ENCODE measurements at regions of chr9 and their contacts with region 1.

Region 1: DNA sequence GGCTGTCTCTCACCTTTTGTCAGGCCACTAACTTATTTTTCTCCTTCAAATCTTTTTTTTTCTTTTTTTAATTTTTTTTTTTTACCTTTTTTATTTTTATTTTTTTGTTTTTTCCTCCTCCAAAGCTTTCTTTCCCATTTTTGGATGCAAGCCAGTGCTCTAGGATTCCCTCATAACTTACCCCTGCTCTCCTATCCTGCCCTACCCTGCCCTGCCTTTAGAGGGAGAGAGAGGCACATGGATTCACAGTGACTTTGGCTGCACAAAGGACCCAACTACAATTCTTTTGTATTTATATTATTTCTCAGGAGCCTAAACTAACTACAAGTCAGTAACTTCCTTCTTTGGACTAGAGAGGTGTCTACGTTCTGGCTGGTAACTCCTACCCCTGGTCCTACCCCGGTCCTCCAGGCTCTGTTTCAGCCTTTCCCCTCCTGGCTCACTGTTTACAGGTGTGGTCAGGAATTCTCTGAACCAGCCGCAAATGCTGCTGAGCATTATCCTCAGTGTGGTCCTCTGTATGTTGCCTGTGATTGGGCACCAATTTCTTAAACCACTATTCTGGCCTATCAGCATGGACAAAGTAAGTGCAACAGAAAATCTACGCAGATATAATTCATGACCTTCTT is 8.4 kb upstream of the RUSC2 start:
- DNase-seq: peak in 1 of 2 donors; percentile 38
- H3K4me3 ChIP-seq: no peak overlapping the region
- CTCF ChIP-seq: no peak
- POLR2A ChIP-seq: no peak

Region 2: GRCh38 chr9:35116898-35117551 is 364.4 kb before region 1 on chr9:
- intact Hi-C with region 1: loop called (anchors 5 kb)
- DNase-seq: peak; percentile 92 to 97
- H3K4me3 ChIP-seq: no peak overlapping the region
- CTCF ChIP-seq: peak in 1 of 3 donors; percentile 87
- POLR2A ChIP-seq: no peak

Region 3: GRCh38 chr9:35553670-35554543 is 72.4 kb after region 1 on chr9:
- intact Hi-C with region 1: loop called (anchors 5 kb)
- DNase-seq: peak; percentile 61 to 92
- H3K4me3 ChIP-seq: no peak overlapping the region
- CTCF ChIP-seq: peak in 1 of 3 donors; percentile 39
- POLR2A ChIP-seq: no peak

Region 4: DNA sequence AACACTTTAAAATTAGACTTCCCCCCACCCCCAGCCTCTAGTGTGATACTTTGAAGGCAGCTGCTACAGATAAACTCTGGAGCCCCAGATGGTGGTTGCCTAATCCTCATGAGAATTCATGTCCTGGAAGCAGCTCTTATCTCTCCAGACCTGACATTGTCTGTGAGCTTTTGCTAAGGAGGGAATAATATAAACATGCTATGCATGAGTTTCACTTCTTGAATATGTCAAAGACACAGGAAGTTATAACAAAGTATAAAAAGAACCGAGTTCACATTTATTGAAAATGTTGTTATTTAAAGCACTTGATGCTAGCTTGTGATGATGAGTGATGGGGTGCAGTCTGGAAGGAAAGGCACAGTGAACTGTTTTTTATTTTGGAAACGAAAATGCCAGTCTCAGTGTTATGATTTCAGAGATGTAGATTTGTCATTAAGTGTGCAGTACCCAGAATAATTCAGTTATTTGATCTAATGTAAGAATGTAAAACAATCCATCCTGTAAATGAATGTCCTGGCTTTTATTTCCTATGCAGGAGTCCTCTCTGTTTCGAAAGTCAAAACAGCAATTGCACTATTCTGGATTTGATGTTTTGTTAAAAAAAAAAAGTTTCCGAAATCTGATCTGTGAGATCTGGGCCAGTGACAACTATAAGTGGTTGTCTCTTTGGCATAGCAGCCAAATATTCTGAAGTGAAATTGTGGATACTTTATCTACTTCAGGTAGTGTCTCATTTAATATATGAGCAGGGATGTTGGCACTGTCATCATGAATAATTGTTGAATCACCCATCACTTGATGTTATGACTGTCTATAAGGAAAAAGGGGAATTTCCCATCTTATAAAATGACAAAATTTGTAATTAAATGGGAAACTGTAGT is 1715.9 kb after region 1 on chr9:
- intact Hi-C with region 1: no loop called
- DNase-seq: no peak
- H3K4me3 ChIP-seq: no peak overlapping the region
- CTCF ChIP-seq: no peak
- POLR2A ChIP-seq: no peak